Activated T-helper 1 cell treated with anti-CD3 and anti-CD28 coated beads, Interleukin-12 subunit alpha, Interleukin-12 subunit beta, Interleukin-2, Interleukin-4 antibody, amounts not matched to agents 30 ng/mL and 10 ng/mL and 1 ng/mL, durations not matched to agents 14 hours and 24 hours and 36 hours (primary cell): ENCODE measurements at regions of chr14 and their contacts with region 1.

Region 1: DNA sequence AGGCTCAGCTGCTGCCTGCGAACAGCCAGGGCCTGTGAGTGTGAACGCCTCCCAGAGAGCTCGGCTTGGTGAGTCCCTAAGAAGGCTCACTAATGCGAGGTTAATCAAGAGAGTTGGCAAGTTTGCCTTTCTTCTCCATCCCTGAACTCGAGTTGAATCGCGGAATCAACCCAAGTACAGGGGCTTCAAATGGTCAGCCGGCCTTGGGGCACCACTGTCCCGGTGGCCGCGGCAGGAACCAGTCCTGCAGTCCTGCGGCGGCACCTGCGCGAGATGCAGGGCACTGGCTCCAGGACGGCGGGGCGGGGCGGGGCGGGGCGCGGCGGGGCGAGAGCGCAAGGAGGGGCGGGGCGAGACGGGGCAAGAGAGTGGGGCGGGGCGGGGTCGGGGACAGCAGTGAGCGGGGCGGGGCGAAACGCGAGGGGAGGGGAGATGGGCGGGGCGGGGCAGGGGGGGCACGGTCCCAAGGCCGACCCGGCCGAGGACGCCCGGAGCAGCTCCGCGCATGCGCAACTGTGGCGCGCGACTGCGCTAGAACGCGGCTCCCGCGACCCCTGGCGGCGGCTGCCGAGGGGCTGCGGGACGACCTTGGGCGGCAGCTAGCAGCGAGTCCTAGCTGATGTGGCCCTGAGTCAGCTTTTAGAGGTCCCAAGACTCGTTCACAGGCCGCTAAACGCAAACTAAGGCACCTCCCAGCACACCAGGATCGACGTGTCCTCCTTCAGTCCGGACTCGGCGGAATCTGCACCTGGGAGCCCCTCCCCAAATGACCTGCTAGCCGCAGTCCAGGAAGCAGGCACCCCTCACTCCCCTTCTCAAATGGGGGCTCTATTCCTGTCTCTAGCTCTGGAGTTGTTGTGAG is 58.0 kb downstream of the TTC7B start:
- DNase-seq: peak; percentile 93
- H3K4me3 Mint-ChIP-seq: peak overlapping the region; percentile 74
- H3K27ac Mint-ChIP-seq: peak overlapping the region; percentile 78
- H3K4me1 Mint-ChIP-seq: peaks cover 6% of the 10 kb centered on the region
- H3K27me3 Mint-ChIP-seq: peaks cover 27% of the 10 kb centered on the region

Region 2: GRCh38 chr14:90331497-90332435 is 426.5 kb before region 1 on chr14 and contains the start of gene NRDE2:
- intact Hi-C with region 1: loop called (anchors 1 kb)
- DNase-seq: peak; percentile 90
- H3K4me3 Mint-ChIP-seq: peak within 1 kb of the TSS; percentile 93
- H3K27ac Mint-ChIP-seq: peak within 1 kb of the TSS; percentile 88
- H3K4me1 Mint-ChIP-seq: peaks cover 26% of the 10 kb centered on the region
- H3K27me3 Mint-ChIP-seq: peaks cover 24% of the 10 kb centered on the region
- total RNA-seq, gene NRDE2: 22.9 and 24.4 TPM in 2 replicates

Region 3: DNA sequence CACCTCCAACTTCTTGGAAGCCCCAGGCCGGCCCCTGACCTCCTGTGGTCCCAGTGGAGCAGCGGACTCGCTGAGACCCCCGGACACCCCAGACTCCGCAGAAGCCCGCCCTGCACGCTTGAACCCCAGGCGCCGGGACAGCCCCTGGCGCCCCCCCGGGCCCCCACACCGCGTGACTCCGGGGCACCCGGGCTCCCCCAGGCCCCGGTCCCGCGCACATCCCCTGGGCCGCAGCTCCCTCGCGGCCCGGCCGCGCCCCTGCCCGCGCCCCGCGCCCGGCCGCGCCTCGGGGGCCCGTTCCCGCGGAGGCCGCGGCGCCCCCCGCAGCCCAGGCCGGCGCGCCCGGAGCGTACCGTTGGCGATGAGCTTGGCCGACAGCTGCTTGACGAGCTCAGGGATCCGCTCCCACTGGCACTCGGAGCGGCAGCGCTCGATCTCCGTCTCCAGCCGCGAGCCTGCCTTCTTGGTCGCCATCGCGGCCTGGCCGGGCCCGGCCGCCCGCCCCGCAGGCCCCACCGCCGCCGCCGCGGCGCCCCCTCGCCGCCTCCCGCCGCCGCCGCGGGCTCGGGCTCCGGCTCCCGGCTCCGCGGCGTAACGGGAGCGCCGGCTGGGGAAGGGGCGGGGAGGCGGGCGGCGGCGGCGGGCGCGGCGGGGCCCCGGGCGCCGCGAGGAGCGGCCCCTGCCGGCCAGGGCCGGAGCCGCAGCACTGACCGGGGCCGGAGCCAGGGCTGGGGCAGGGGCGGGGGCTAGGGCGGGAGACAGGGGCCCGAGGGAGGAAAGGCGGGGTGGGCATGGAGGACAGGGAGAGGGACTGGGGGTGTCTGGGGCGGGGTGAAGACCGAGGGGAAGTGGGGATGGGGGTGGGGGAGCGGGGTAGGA is 57.8 kb after region 1 on chr14 and contains the start of gene TTC7B:
- intact Hi-C with region 1: loop called (anchors 1 kb)
- DNase-seq: no peak
- H3K4me3 Mint-ChIP-seq: peak within 1 kb of the TSS; percentile 76
- H3K27ac Mint-ChIP-seq: no peak within 1 kb of the TSS
- H3K4me1 Mint-ChIP-seq: peaks cover 10% of the 10 kb centered on the region
- H3K27me3 Mint-ChIP-seq: peaks cover 42% of the 10 kb centered on the region
- total RNA-seq, gene TTC7B: 3.1 and 4.3 TPM in 2 replicates

Region 4: DNA sequence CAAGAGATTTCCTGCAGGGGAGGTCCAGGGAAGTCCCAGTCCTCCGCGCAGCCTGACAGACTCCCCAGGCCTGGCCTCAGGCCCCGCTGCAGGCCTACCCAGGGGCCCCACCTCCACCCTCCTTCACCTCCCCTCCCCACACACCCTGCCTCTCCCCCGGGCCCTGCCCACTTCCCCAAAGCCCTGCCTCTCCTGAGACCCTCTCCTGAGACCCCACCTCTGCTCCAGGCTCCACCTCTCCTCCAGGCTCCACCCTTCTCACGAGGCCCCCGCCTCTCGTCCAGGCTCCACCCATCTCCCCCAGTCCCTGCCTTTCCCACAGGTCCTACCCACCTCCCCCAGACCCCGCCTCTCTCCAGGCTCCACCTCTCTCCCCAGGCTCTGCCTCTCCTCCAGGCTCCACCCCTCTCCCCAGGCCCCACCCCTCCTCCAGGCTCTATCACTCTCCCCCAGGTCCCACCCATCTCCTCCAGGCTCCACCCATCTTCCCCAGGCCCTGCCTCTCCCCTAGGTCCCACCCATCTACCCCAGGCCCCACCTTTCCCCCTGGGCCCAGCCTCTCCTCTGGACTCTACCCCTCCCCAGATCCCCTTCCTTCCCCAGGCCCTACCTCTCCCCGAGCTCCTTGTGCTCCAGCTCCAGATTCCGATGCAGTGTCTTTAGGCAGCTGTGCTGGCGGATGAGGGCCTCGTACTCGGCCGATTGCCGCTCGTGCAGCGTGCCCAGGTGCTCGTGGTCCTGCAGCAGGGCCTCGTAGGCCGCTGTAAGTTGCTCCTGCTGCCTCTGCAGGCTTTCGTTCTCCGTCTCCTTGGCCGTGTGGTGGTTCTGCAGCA is 545.0 kb after region 1 on chr14:
- intact Hi-C with region 1: loop called (anchors 1 kb)
- DNase-seq: peak; percentile 36
- H3K4me3 Mint-ChIP-seq: peak overlapping the region; percentile 63
- H3K27ac Mint-ChIP-seq: peak overlapping the region; percentile 98
- H3K4me1 Mint-ChIP-seq: peaks cover 72% of the 10 kb centered on the region
- H3K27me3 Mint-ChIP-seq: no peaks in the 10 kb centered on the region